A549 (cell line): ENCODE measurements at regions of chr2 and their contacts with region 1.

Region 1: DNA sequence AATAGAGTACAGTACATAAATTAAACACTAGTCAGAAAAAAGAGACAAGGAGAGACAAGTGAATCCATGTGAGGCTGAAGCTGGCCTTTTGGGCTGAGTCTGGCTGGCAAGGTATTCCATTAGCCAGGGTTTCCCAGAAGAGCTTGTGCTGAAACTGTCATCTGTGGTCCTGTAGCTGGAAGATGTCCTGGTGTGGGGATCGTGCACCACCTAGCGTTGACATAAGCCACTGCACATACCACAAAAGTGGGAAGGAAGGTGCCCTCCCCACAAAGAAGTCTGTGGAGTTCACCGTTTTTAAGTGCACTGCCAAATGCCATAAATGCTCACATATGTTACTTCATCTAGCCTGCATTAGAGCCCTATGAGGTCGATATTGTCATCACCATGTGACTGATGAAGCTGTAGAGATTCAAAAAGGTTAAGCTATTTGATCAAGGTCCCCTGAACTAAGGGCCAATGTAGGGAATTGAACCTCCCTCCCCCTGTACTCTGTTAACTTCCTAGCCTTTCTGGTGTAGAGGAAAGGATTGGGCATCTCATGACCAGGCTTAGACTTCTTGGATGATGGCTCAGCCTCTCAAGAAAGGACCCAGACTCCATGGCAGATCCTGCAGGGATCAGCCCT is 31.9 kb upstream of the GALNT14 start:
- DNase-seq: peak; percentile 78 to 84
- ATAC-seq: peak; percentile 92 to 98
- H3K4me3 ChIP-seq: no peak overlapping the region
- H3K27ac ChIP-seq: no peak overlapping the region
- H3K4me1 ChIP-seq: no peaks in the 10 kb centered on the region
- CTCF ChIP-seq: peak; percentile 97
- EP300 ChIP-seq: no peak
- POLR2A ChIP-seq: no peak
- RAD21 ChIP-seq: peak; percentile 96 to 98

Region 2: DNA sequence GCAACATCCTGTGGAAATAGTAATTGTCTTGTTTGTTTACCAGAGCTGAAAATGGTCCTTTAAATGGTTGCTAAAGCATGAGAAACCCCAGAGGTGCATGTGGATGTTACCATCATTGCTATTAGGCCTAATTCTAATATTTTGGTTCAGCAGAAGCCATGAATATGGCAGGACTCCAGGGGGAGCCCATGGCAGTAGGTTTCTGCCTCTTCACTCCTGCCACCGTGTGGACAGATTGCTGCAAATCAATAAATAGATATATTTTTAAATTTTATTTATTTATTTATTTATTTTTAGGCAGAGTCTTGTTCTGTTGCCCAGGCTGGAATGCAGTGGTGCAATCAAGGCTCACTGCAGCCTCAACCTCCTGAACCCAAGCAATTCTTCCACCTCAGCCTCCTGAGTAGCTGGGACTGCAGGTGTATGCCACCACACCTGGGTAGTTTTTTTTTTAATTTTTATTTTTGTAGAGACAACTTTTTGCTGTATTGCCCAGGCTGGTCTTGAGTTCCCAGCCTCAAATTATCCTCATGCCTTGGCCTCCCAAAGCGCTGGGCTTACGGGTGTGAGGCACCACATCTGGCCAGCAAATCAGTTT is 308.0 kb before region 1 on chr2:
- CTCF ChIA-PET with region 1: interaction called, 70 read pairs
- POLR2A ChIA-PET with region 1: no interaction called
- DNase-seq: peak; percentile 59 to 87
- ATAC-seq: peak; percentile 68 to 87; a peak in 5 of 6 replicates
- H3K4me3 ChIP-seq: no peak overlapping the region
- H3K27ac ChIP-seq: no peak overlapping the region
- H3K4me1 ChIP-seq: no peaks in the 10 kb centered on the region
- CTCF ChIP-seq: peak; percentile 96
- EP300 ChIP-seq: no peak
- POLR2A ChIP-seq: no peak
- RAD21 ChIP-seq: peak; percentile 73 to 80

Region 3: GRCh38 chr2:31151501-31151900 is 18.7 kb before region 1 on chr2:
- CTCF ChIA-PET with region 1: interaction called, 45 read pairs
- POLR2A ChIA-PET with region 1: no interaction called
- DNase-seq: peak in 1 of 2 experiments; percentile 26
- ATAC-seq: peak; percentile 72 to 76; a peak in 5 of 6 replicates
- H3K4me3 ChIP-seq: no peak overlapping the region
- H3K27ac ChIP-seq: no peak overlapping the region
- H3K4me1 ChIP-seq: peaks cover 8% of the 10 kb centered on the region; the same call in 2 of the 3 replicates
- CTCF ChIP-seq: peak; percentile 20; the same call in 1 of the 3 replicates
- EP300 ChIP-seq: no peak
- POLR2A ChIP-seq: no peak
- RAD21 ChIP-seq: peak; percentile 29 to 35; a peak in 4 of 5 replicates

Region 4: GRCh38 chr2:31188131-31188530 is 17.9 kb after region 1 on chr2:
- CTCF ChIA-PET with region 1: interaction called, 12 read pairs
- POLR2A ChIA-PET with region 1: no interaction called
- DNase-seq: no peak
- ATAC-seq: no peak
- H3K4me3 ChIP-seq: no peak overlapping the region
- H3K27ac ChIP-seq: no peak overlapping the region
- H3K4me1 ChIP-seq: no peaks in the 10 kb centered on the region
- CTCF ChIP-seq: no peak
- EP300 ChIP-seq: no peak
- POLR2A ChIP-seq: no peak
- RAD21 ChIP-seq: no peak